Activated CD8-positive, alpha-beta memory T cell treated with anti-CD3 and anti-CD28 coated beads, Interleukin-2, amount 10 ng/mL, durations not matched to agents 7 days and 5 days (primary cell): ENCODE measurements at regions of chr1 and their contacts with region 1.

Region 1: DNA sequence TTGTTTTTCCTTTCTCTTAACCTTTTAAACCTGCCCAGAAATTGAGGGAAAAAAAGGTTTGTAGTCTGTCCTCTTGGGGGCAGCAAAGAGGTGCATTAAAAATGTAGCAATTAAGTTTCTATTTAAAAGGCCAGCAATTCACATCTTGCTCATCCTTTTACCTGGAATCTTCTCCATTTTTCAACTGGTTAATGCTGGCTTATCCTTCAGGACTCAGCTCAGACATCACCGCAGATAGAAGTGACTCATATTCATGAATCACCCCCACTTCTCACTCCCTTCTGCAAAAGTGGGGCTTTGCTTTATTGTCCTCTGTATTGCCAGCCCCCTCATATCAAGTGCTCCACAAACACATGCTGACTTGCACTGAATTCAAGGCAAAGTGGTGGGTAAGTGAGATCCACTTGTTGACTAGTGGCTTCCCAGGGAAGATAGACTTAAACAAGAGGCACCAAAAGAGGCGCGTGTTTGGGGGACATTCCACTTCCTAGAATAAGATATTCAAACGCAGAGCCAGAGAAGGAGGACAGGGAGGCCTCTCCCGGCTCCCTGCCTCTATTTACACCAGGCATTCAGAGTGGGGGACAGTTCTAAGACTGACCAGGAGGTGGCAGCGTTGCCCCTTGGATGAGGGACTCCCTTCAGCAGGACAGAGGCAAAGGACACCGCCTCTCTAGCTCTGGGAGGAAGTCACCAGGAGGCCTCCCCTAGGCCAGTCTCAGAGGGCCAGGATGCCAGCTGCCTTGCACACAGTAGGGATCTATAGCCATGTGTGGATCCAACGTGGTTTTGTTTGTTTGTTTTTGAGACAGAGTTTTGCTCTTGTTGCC is 23.2 kb upstream of the ZNF648 start:
- DNase-seq: peak; percentile 89
- ATAC-seq: peak; percentile 87
- H3K4me3 Mint-ChIP-seq: no peak overlapping the region
- H3K27ac Mint-ChIP-seq: peak overlapping the region; percentile 22
- H3K4me1 Mint-ChIP-seq: peaks cover 47% of the 10 kb centered on the region
- H3K27me3 Mint-ChIP-seq: no peaks in the 10 kb centered on the region

Region 2: GRCh38 chr1:181479137-181479745 is 605.5 kb before region 1 on chr1:
- CTCF ChIA-PET with region 1: interaction called, 11 read pairs
- DNase-seq: peak; percentile 47
- ATAC-seq: peak; percentile 55
- H3K4me3 Mint-ChIP-seq: no peak overlapping the region
- H3K27ac Mint-ChIP-seq: no peak overlapping the region
- H3K4me1 Mint-ChIP-seq: peaks cover 3% of the 10 kb centered on the region
- H3K27me3 Mint-ChIP-seq: peaks cover 51% of the 10 kb centered on the region

Region 3: GRCh38 chr1:182038220-182038619 is 46.5 kb before region 1 on chr1:
- CTCF ChIA-PET with region 1: no interaction called
- DNase-seq: no peak
- ATAC-seq: no peak
- H3K4me3 Mint-ChIP-seq: no peak overlapping the region
- H3K27ac Mint-ChIP-seq: no peak overlapping the region
- H3K4me1 Mint-ChIP-seq: peaks cover 6% of the 10 kb centered on the region
- H3K27me3 Mint-ChIP-seq: no peaks in the 10 kb centered on the region

Region 4: DNA sequence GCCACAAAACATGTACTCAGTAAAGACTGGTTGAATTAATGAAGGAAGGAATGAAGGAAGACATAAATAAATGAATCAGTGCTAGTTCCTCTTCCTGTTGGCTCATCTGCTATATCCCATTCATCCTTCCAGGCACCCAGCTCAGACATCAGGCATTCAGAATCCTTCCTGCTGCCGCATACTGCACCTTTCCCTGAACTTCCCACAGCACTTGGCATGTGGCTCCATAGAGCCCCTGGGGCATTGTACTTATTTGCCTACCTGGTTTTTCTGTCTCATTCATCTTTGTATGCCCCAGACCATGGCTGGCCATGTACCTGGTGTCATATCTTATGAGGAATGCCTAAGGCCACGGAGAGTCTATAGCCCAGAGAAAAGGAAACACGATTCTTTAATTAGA is 11.3 kb after region 1 on chr1:
- CTCF ChIA-PET with region 1: interaction called, 11 read pairs
- DNase-seq: no peak
- ATAC-seq: no peak
- H3K4me3 Mint-ChIP-seq: no peak overlapping the region
- H3K27ac Mint-ChIP-seq: no peak overlapping the region
- H3K4me1 Mint-ChIP-seq: no peaks in the 10 kb centered on the region
- H3K27me3 Mint-ChIP-seq: peaks cover 40% of the 10 kb centered on the region

Region 5: DNA sequence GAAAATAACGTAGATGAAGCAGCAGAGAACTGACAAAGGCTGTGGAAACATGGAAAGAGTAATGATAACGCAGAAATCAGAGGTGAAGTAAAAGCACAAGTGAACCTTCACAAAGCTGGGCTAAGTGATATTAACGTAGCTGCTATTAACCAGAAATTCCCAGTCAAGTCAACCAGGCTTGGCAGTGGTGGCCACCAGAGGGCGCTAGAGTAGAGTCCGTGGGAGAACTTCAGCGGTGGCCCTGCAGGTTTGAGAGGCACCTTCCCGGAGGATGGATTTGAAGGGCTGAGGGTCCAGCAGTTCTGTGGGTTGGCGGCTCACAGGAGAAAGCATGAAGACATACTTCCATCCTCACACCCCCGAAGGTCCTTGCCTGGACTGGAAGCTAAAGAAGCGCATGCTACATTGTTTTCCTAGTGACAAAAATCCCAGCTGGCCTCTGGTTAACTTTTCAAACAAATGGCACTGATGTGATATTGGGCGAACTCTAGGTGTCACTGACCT is 58.5 kb after region 1 on chr1:
- CTCF ChIA-PET with region 1: interaction called, 38 read pairs
- DNase-seq: peak; percentile 88
- ATAC-seq: peak; percentile 76
- H3K4me3 Mint-ChIP-seq: no peak overlapping the region
- H3K27ac Mint-ChIP-seq: no peak overlapping the region
- H3K4me1 Mint-ChIP-seq: peaks cover 21% of the 10 kb centered on the region
- H3K27me3 Mint-ChIP-seq: peaks cover 10% of the 10 kb centered on the region

Region 6: DNA sequence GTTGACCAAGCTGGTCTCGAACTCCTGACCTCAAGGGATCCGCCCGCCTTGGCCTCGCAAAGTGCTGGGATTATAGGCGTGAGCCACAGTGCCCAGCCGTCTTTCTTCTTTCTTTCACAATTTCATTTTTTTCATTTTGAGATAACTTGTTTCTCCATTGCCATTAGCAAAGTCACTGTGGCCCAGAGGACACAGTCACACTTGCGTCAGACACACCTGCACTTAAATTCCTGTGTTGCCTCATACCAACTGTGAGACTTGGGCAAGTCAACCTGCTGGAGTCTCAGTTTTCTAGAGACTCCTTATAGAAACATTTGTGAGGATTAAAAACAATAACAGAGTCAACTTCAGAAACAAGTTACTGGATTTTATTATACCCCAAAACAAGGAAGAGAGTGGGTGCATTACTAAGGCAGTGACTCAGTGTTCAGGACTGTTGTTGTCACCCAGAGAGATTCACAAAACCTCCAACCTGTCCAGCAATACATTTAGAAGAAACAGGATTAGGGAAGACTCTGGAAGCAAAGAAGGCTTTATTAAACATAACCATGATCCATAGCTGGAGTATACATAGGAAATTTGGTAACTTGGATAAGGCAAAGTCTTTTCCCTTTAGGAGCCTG is 313.2 kb after region 1 on chr1:
- CTCF ChIA-PET with region 1: interaction called, 56 read pairs
- DNase-seq: no peak
- ATAC-seq: no peak
- H3K4me3 Mint-ChIP-seq: no peak overlapping the region
- H3K27ac Mint-ChIP-seq: no peak overlapping the region
- H3K4me1 Mint-ChIP-seq: peaks cover 4% of the 10 kb centered on the region
- H3K27me3 Mint-ChIP-seq: peaks cover 38% of the 10 kb centered on the region